Breast epithelium (tissue), 4 donors: ENCODE measurements at regions of chr6 and their contacts with region 1.

Region 1: GRCh38 chr6:68497927-68498326 is 137.2 kb upstream of the ADGRB3 start:
- DNase-seq: no peak
- H3K4me3 ChIP-seq: no peak overlapping the region
- H3K27ac ChIP-seq: no peak overlapping the region
- H3K4me1 ChIP-seq: no peaks in the 10 kb centered on the region
- H3K27me3 ChIP-seq: no peaks in the 10 kb centered on the region
- CTCF ChIP-seq: no peak
- POLR2A ChIP-seq: no peak

Region 2: DNA sequence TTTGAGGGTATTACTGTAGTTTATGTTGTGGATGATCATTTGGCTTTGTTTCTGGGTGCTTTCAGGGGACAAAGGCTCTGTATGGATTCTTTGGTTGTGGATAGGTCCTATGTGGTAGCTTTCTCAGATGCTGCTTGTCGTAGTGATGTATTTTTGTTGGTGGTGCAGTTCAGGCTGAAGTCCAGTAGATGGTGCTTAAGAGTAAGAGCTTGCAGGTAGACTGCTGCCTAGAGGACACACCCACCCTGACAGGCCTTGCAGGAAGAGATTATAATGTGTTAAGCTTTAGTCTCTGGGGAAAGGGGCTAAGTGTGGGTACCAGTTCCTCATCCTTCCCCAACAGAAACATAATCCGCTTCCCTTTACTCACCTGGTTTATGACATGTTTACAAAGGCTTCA is 74.6 kb after region 1 on chr6:
- intact Hi-C with region 1: loop called (anchors 2 kb)
- DNase-seq: no peak
- H3K4me3 ChIP-seq: no peak overlapping the region
- H3K27ac ChIP-seq: no peak overlapping the region
- H3K4me1 ChIP-seq: no peaks in the 10 kb centered on the region
- H3K27me3 ChIP-seq: no peaks in the 10 kb centered on the region
- CTCF ChIP-seq: no peak
- POLR2A ChIP-seq: no peak